ENCODE measurements at regions of chr6 and their contacts with region 1.

Region 1: GRCh38 chr6:111361648-111362047 is 121.4 kb downstream of the REV3L start:
- DNase-seq: no peak
- H3K4me3 ChIP-seq: no peak overlapping the region
- H3K27ac ChIP-seq: peak overlapping the region in 1 of 4 donors; percentile 7
- H3K4me1 ChIP-seq: peaks cover 0 to 31% (median 4%) of the 10 kb centered on the region in 4 donors
- H3K27me3 ChIP-seq: no peaks in the 10 kb centered on the region
- CTCF ChIP-seq: peak in 3 of 4 experiments; percentile 29 to 64 (median 34)
- EP300 ChIP-seq: no peak
- POLR2A ChIP-seq: no peak

Region 2: GRCh38 chr6:111129013-111129412 is 232.6 kb before region 1 on chr6:
- intact Hi-C with region 1: no loop called
- DNase-seq: peak; percentile 67
- H3K4me3 ChIP-seq: no peak overlapping the region
- H3K27ac ChIP-seq: peak overlapping the region in 1 of 4 donors; percentile 27
- H3K4me1 ChIP-seq: peaks cover 0 to 18% (median 7%) of the 10 kb centered on the region in 4 donors
- H3K27me3 ChIP-seq: no peaks in the 10 kb centered on the region
- CTCF ChIP-seq: no peak
- EP300 ChIP-seq: no peak
- POLR2A ChIP-seq: no peak

Region 3: DNA sequence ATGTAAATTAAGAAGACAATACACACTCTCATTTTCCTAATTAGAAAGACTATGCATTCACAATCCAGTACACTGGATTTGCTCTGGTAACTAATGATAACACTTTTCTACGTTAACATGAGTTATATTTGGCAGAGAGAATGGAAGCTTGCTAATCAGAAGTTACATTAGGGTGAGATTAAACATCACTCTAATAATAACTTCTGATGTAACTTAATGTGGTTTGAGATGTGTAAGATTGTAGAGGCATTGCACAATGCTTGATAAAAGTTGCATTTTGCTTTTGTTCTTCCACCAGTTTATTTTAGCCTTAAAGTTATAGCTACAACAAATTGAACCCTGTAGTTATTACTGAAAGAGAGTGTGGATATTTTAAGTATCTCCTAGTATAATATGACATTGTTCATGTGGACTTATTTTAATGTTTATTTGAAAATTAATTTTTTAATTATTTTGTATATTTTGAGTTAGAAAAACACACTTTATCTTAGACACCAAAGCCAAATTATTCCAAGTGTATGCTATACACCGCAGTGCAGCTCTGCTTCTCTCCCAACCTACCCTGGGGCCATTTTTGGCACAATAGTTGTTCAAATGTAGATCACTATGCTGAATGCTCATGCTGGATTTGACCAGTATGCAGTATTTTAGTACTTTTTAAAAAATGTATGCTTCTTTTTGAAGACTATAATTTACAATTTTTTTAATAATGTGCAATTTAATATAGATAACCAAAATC is 131.1 kb before region 1 on chr6:
- intact Hi-C with region 1: no loop called
- DNase-seq: no peak
- H3K4me3 ChIP-seq: no peak overlapping the region
- H3K27ac ChIP-seq: no peak overlapping the region
- H3K4me1 ChIP-seq: peaks cover 0 to 6% (median 2%) of the 10 kb centered on the region in 4 donors
- H3K27me3 ChIP-seq: no peaks in the 10 kb centered on the region
- CTCF ChIP-seq: no peak
- EP300 ChIP-seq: no peak
- POLR2A ChIP-seq: no peak

Region 4: DNA sequence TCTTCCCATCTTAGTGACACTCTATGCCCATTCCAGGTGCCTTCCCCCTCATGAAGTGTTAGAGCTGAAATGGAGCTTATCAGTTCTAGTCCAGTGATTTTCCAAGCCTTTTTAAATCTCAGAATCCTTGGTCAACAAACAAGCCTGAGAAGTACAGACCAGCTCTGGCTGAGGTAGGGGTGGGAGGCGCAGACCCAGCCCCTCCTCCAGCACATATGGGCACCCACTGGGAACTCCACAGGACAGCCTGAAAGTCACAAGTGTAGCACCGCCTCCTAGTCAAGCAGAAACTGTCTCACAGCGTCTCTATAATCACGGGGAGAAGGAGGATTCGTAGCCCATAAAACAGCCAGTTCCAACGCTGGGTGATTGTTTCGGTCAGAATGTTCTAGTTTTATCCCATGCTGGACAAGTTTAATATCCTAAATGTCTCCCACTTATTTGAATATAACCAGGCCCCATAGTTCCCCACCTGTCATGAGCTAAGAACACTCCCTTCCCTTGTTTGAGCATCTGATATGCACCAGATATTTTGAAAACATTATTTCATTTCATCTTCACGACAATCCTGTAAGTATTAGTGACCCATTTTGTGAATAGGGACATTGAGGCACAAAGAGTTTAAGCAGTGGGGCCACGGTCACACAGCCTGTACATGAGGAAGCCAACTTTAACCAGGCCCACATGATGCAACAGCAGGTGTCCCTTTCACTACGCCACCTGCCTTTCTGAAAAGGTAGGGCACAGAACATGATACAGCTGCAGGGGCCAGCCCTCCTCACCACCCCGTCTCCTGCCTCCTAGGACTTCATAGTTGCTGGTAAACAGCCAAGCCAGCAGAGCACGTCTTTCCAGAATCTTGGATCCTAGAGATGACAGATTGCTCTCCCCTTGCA is 203.9 kb after region 1 on chr6:
- intact Hi-C with region 1: loop called (anchors 10 kb)
- DNase-seq: no peak
- H3K4me3 ChIP-seq: no peak overlapping the region
- H3K27ac ChIP-seq: peak overlapping the region; percentile 59 to 82 (median 72)
- H3K4me1 ChIP-seq: peaks cover 0 to 65% (median 56%) of the 10 kb centered on the region in 4 donors
- H3K27me3 ChIP-seq: no peaks in the 10 kb centered on the region
- CTCF ChIP-seq: no peak
- EP300 ChIP-seq: peak in 2 of 4 donors; percentile 14 to 65
- POLR2A ChIP-seq: no peak

Region 5: DNA sequence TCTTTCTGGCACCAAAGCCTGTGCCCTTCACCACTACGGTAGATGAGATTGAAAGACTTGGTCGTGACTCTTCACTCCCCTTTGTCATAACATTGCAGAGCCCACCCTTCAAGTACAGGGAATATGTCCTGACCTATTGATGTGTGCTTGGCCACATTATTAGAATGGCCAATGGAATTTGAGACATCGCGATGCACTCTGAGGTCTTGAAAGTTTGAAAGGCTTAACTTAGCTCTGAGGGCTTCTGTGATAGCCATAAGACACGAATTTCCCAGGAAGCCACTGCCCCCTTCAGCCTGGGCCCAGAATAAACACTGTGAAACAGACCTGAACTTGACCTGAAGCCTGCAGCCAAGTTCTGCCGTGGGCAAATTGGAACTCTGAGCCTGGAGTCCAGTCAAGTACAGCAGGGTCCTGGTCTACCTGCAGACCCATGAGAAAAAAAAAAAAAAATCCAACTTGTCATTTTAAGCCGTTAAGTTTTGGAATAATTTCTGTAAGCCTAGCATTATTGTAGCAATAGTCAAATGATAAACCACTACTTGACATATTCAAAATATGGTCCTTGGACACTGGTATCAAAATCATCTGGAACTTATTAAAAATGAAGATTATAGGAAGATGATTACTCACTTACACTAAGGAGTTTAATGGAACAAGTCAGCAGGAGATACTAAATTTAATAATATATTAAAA is 281.0 kb after region 1 on chr6:
- intact Hi-C with region 1: loop called (anchors 5 kb)
- DNase-seq: peak; percentile 78
- H3K4me3 ChIP-seq: no peak overlapping the region
- H3K27ac ChIP-seq: no peak overlapping the region
- H3K4me1 ChIP-seq: peaks cover 0 to 16% (median 10%) of the 10 kb centered on the region in 4 donors
- H3K27me3 ChIP-seq: no peaks in the 10 kb centered on the region
- CTCF ChIP-seq: peak; percentile 29 to 59 (median 55)
- EP300 ChIP-seq: no peak
- POLR2A ChIP-seq: no peak

Measured in sigmoid colon (tissue), 7 donors.